Left ventricle myocardium inferior (tissue), 1 donor: ENCODE measurements at regions of chr7 and their contacts with region 1.

Region 1: DNA sequence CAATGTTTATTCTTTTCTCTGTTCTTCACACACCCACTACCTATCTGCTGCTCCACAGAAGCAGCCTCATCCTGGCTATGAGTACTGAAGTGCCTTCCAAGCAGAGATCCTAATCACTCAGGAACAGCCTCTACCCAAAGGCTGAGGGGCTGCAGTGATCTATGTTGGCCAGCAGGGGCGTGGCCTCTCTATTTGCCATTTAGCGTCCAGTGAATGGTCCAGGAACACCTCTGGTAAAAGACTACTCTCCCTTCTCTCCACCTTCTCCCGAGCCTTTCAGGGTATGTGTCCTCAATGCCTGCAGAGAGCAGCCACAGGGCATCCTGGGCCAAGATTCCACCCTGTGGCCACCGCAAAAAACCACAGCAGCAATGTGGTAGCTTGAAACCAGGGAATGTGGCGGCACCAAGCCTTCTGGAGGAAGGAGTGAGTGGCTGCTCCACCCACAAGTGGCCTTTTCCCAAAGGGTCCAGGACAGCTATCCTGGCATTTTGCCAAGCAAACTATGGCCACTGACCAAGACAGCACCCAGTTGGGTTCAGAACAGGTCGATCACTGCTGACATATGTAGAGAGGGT is 70.9 kb downstream of the SYPL1 start:
- DNase-seq: no peak
- H3K4me3 ChIP-seq: no peak overlapping the region
- H3K27ac ChIP-seq: no peak overlapping the region
- H3K4me1 ChIP-seq: peaks cover 17% of the 10 kb centered on the region
- H3K27me3 ChIP-seq: peaks cover 19% of the 10 kb centered on the region
- CTCF ChIP-seq: peak; percentile 76

Region 2: GRCh38 chr7:105652359-105652993 is 388.8 kb before region 1 on chr7:
- intact Hi-C with region 1: loop called (anchors 10 kb)
- DNase-seq: peak; percentile 74
- H3K4me3 ChIP-seq: no peak overlapping the region
- H3K27ac ChIP-seq: no peak overlapping the region
- H3K4me1 ChIP-seq: peaks cover 34% of the 10 kb centered on the region
- H3K27me3 ChIP-seq: no peaks in the 10 kb centered on the region
- CTCF ChIP-seq: peak; percentile 95

Region 3: GRCh38 chr7:105759670-105760550 is 281.3 kb before region 1 on chr7:
- intact Hi-C with region 1: loop called (anchors 2 kb)
- DNase-seq: no peak
- H3K4me3 ChIP-seq: no peak overlapping the region
- H3K27ac ChIP-seq: no peak overlapping the region
- H3K4me1 ChIP-seq: no peaks in the 10 kb centered on the region
- H3K27me3 ChIP-seq: no peaks in the 10 kb centered on the region
- CTCF ChIP-seq: peak; percentile 70

Region 4: GRCh38 chr7:105830391-105831301 is 210.6 kb before region 1 on chr7:
- intact Hi-C with region 1: no loop called
- DNase-seq: no peak
- H3K4me3 ChIP-seq: no peak overlapping the region
- H3K27ac ChIP-seq: no peak overlapping the region
- H3K4me1 ChIP-seq: peaks cover 11% of the 10 kb centered on the region
- H3K27me3 ChIP-seq: no peaks in the 10 kb centered on the region
- CTCF ChIP-seq: no peak